ENCODE measurements at regions of chr2 and their contacts with region 1.

Region 1: DNA sequence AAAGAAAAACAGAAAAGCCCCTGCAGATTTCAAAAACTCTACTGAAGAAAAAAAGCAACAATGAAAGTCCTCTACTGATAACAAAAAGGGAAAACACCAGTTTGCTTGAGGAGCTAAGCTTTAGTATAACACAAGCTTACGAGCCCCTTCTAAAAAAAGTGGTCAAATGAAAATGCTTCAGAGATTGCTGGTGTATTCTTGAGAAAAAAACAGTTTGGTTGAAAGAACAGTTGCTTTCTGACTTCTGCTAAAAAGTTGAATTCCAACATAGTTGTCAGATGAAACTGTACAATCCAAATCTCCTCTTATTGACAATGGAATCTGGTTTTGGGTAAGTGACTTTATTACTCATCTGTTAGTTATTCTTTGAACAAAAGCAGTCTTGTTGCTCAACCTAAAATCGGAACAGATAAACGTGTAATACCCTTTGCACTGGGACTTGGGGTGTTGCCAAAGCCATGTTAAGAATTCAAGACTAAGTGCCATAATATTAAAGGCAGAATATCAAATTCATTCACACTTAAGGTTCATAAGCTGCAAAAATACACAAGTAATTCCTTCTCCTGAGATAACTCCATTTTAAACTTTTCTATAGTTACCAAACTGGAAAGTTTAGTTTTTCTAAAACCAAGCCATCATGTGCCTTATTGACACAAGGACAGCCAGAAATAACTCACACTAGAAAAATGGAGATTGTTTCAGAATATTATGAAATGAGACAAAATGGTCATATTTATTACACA is 45.3 kb upstream of the SPAG16 start:
- DNase-seq: peak in 1 of 2 donors; percentile 70
- H3K4me3 ChIP-seq: peak overlapping the region; percentile 26 to 43
- H3K27ac ChIP-seq: peak overlapping the region; percentile 53 to 54
- H3K4me1 ChIP-seq: peaks cover 0 to 8% of the 10 kb centered on the region in 2 donors
- H3K27me3 ChIP-seq: no peaks in the 10 kb centered on the region
- CTCF ChIP-seq: no peak

Region 2: GRCh38 chr2:212777020-212777491 is 461.9 kb before region 1 on chr2:
- intact Hi-C with region 1: loop called (anchors 10 kb)
- DNase-seq: no peak
- H3K4me3 ChIP-seq: no peak overlapping the region
- H3K27ac ChIP-seq: no peak overlapping the region
- H3K4me1 ChIP-seq: no peaks in the 10 kb centered on the region
- H3K27me3 ChIP-seq: no peaks in the 10 kb centered on the region
- CTCF ChIP-seq: peak; percentile 26 to 63 (median 47)

Region 3: DNA sequence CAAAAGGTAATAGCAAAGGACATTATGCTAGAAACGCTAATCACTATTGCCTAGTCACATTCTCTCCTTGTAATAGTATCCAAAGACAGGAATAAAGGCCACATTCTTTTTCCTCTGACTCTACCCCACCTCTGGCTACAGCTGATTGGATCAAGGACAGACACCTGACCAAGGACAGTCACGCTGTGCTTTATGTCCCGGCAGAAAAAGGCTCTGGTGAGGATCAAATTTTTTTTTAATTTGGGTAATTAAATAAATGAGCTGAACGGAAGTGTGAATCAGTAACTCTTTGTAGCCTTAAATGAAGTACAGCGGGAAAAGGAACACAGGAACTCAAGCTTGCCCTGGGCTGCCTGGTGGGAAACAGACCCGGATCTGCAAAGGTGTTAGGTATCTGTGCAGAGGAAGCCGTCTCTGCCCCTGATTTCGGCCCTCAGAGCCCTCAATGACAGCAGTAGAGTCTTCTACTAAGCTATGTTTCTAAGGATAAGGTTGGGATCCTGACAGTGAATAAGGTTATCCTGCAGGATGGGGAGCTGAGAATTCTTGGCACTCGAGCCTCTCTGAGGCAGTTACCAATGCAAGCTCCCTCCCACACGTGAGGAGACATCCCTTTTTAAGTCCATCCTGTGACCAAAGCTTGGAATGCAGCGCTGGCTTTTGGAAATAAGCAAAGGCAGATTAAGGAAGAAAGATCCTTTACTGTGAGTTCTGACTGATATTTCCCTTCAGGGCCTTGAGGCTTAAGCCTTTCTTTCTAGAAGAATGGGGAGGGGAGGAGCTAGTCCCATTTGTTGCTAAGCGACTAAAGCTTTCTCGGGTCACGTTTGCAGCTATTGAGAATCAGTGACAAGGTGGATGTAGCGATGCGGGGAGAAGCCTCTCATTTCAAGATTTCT is 49.7 kb before region 1 on chr2:
- intact Hi-C with region 1: no loop called
- DNase-seq: no peak
- H3K4me3 ChIP-seq: no peak overlapping the region
- H3K27ac ChIP-seq: no peak overlapping the region
- H3K4me1 ChIP-seq: peaks cover 0 to 8% of the 10 kb centered on the region in 2 donors
- H3K27me3 ChIP-seq: no peaks in the 10 kb centered on the region
- CTCF ChIP-seq: no peak

Region 4: DNA sequence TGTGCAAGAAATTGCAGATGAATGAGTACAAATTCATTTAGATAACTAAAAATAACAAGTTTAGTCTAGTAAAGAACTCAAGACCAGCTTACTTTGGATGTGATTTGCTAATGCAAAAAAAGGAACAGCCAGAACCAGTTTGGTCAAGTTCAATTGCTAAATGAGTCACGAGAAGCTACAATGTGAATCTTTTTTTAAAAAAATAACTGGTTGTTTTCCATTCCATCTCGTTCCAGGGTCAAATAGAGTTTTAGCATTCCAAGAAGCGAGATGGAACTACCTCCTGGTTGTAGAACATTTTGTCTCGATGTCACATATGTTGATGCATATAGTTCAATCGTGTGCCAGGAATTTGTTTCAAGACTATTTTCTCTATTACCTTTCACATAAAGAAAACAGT is 22.5 kb before region 1 on chr2:
- intact Hi-C with region 1: loop called (anchors 2 kb)
- DNase-seq: no peak
- H3K4me3 ChIP-seq: no peak overlapping the region
- H3K27ac ChIP-seq: peak overlapping the region; percentile 57 to 70
- H3K4me1 ChIP-seq: peaks cover 0 to 20% of the 10 kb centered on the region in 2 donors
- H3K27me3 ChIP-seq: no peaks in the 10 kb centered on the region
- CTCF ChIP-seq: no peak

Measured in ascending aorta (tissue), 2 donors.